Activated T-helper 2 cell treated with anti-CD3 and anti-CD28 coated beads, Interferon-gamma antibody, Interleukin-2, Interleukin-4, amounts not matched to agents 10 μg/mL and 5 μg/mL and 100 μg/mL, durations not matched to agents 14 hours and 24 hours and 36 hours (primary cell): ENCODE measurements at regions of chr1 and their contacts with region 1.

Region 1: DNA sequence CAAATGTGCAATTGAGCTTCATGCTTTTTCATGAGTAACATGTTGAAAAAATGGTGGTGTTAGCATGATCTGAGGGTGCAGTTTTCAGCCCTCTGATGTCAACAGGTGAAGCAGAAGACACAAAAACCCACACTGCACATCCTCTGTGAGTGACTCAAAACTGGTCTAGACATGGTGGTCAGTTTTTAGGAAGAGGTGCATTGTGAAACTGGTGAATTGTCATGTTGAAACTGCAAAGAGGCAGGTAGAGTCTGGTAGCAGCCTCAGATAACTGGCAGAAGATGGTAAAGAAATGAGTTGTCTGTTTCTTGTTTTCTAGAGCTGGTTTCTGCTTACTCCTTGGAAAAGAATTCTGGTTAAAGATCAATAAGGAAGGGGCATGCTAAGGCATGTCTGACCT is 97.3 kb upstream of the HMCN1 start:
- DNase-seq: peak; percentile 56
- H3K4me3 Mint-ChIP-seq: no peak overlapping the region
- H3K27ac Mint-ChIP-seq: peak overlapping the region; percentile 79
- H3K4me1 Mint-ChIP-seq: peaks cover 22% of the 10 kb centered on the region
- H3K27me3 Mint-ChIP-seq: no peaks in the 10 kb centered on the region

Region 2: DNA sequence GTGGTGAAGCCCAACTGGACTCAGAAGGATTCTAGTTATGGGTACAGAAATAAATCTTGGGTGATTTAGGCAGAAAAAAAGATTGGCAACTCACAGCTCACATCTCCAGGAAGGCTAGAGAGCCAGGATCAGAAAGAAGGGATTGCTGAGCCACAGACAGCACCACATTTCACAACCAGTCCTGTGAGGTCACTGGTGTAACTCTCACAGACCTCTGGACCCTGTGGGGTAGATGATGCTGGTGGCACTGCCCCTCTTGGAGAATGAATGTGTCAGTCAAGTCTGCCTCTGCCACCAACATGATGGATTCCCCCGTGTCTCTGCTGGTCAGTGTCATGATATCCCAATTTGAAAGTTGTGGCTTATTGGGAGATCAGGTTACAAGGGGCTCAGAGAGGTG is 26.5 kb after region 1 on chr1:
- intact Hi-C with region 1: loop called (anchors 2 kb)
- DNase-seq: no peak
- H3K4me3 Mint-ChIP-seq: no peak overlapping the region
- H3K27ac Mint-ChIP-seq: no peak overlapping the region
- H3K4me1 Mint-ChIP-seq: peaks cover 15% of the 10 kb centered on the region
- H3K27me3 Mint-ChIP-seq: no peaks in the 10 kb centered on the region

Region 3: DNA sequence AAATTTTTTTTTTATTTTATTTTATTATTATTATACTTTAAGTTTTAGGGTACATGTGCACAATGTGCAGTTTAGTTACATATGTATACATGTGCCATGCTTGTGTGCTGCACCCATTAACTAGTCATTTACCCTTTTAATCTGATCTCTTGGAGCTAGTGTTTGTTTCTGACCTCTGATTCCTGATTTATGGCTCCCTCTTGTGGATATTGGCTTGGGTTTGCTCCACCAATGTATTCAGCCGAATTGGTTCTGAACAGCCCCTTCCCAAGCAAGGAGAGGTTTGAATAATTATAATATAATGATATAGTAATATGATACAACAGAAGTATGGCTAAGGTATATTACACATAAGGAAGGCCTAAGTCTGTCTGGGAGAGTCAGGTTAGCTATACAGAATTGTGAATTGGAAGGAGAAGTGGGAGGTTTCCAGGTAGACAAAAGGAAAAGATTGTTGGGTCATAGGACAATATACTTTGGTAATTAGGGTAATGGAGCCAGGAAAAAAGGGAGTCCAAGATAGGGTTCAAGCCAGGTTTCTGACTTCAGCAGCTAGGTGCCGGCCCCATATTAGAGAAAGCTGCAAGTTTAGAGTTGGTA is 44.3 kb after region 1 on chr1:
- intact Hi-C with region 1: loop called (anchors 5 kb)
- DNase-seq: no peak
- H3K4me3 Mint-ChIP-seq: no peak overlapping the region
- H3K27ac Mint-ChIP-seq: no peak overlapping the region
- H3K4me1 Mint-ChIP-seq: peaks cover 14% of the 10 kb centered on the region
- H3K27me3 Mint-ChIP-seq: peaks cover 7% of the 10 kb centered on the region

Region 4: DNA sequence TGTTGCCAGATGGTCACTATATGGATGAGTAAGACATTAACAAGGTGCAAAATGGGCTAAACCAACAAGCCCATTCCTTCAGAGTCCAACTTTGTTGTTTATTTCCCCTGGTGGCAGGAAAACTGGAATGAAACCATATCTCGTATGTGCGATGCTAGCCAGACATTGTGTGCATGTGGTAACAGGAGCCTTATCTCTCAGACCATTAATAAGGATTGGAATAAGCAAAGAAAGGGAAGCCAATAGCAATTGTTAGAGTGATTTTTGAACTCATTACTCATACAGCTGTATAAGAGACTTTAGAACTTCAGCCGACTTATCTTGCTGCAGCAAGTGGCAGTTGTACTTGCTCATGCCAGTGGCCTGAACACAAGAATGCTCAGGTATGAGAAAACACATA is 67.3 kb after region 1 on chr1:
- intact Hi-C with region 1: no loop called
- DNase-seq: no peak
- H3K4me3 Mint-ChIP-seq: no peak overlapping the region
- H3K27ac Mint-ChIP-seq: no peak overlapping the region
- H3K4me1 Mint-ChIP-seq: peaks cover 11% of the 10 kb centered on the region
- H3K27me3 Mint-ChIP-seq: peaks cover 28% of the 10 kb centered on the region

Region 5: DNA sequence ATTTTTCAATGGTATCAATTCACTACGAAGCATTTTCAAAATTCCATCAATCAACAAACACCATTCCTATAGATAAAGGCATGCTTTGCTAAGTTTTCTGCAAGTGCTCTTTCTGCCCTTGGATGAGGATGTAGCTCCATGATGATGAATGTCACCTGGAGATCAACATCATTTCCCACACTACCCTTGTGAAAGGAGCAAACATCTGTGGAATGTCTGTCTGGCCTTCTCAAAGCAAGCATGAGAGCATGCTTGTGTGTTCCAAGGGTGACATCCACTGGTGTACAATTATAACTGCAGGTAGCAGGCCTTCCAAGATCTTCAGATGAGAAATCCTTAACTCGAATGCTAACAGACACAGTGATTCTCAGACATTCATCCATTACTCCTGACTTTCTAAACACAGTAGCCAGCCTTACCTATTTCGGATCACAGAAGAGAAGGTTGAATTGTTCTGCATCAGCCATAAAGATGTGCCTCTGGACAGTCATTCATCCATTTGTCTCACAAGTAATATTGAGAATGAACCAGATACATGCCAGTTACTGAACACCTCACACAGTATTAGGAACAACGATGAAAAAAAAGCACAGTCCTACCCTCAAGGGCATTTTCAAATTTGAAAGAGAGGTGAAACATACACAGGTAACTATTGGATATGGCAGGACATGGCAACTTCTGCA is 575.8 kb after region 1 on chr1:
- intact Hi-C with region 1: no loop called
- DNase-seq: no peak
- H3K4me3 Mint-ChIP-seq: no peak overlapping the region
- H3K27ac Mint-ChIP-seq: no peak overlapping the region
- H3K4me1 Mint-ChIP-seq: no peaks in the 10 kb centered on the region
- H3K27me3 Mint-ChIP-seq: peaks cover 24% of the 10 kb centered on the region